ENCODE measurements at regions of chr2 and their contacts with region 1.

Region 1: GRCh38 chr2:173955004-173955403 is 10.2 kb downstream of the SP3 start:
- DNase-seq: peak in 2 of 9 experiments; percentile 28 to 42
- ATAC-seq: no peak
- H3K4me3 ChIP-seq: no peak overlapping the region
- H3K4me3 Mint-ChIP-seq: peak overlapping the region; percentile 0
- H3K27ac ChIP-seq: no peak overlapping the region
- H3K27ac Mint-ChIP-seq: no peak overlapping the region
- H3K4me1 ChIP-seq: peaks cover 88% of the 10 kb centered on the region
- H3K4me1 Mint-ChIP-seq: peaks cover 90% of the 10 kb centered on the region
- H3K27me3 ChIP-seq: no peaks in the 10 kb centered on the region
- H3K27me3 Mint-ChIP-seq: no peaks in the 10 kb centered on the region
- CTCF ChIP-seq: no peak

Region 2: GRCh38 chr2:173652767-173653431 is 302.1 kb before region 1 on chr2:
- CTCF ChIA-PET with region 1: no interaction called
- POLR2A ChIA-PET with region 1: no interaction called
- intact Hi-C with region 1: no loop called
- DNase-seq: no peak
- ATAC-seq: no peak
- H3K4me3 ChIP-seq: no peak overlapping the region
- H3K4me3 Mint-ChIP-seq: no peak overlapping the region
- H3K27ac ChIP-seq: no peak overlapping the region
- H3K27ac Mint-ChIP-seq: no peak overlapping the region
- H3K4me1 ChIP-seq: no peaks in the 10 kb centered on the region
- H3K4me1 Mint-ChIP-seq: no peaks in the 10 kb centered on the region
- H3K27me3 ChIP-seq: no peaks in the 10 kb centered on the region
- H3K27me3 Mint-ChIP-seq: peaks cover 5% of the 10 kb centered on the region
- CTCF ChIP-seq: no peak

Region 3: GRCh38 chr2:173922760-173923159 is 32.2 kb before region 1 on chr2:
- CTCF ChIA-PET with region 1: interaction called, 4 read pairs
- POLR2A ChIA-PET with region 1: no interaction called
- intact Hi-C with region 1: loop called (anchors 2 to 5 kb)
- DNase-seq: no peak
- ATAC-seq: no peak
- H3K4me3 ChIP-seq: no peak overlapping the region
- H3K4me3 Mint-ChIP-seq: no peak overlapping the region
- H3K27ac ChIP-seq: no peak overlapping the region
- H3K27ac Mint-ChIP-seq: peak overlapping the region; percentile 84
- H3K4me1 ChIP-seq: peaks cover 38% of the 10 kb centered on the region
- H3K4me1 Mint-ChIP-seq: peaks cover 74% of the 10 kb centered on the region
- H3K27me3 ChIP-seq: no peaks in the 10 kb centered on the region
- H3K27me3 Mint-ChIP-seq: no peaks in the 10 kb centered on the region
- CTCF ChIP-seq: no peak

Measured in CD8-positive, alpha-beta T cell (primary cell).